Activated B cell treated with CpG ODN at 0.5 μM for 24 hours (primary cell): ENCODE measurements at regions of chr2 and their contacts with region 1.

Region 1: GRCh38 chr2:142914507-142915313 is 37.2 kb downstream of the KYNU start:
- DNase-seq: no peak
- ATAC-seq: peak; percentile 93
- H3K4me3 Mint-ChIP-seq: peak overlapping the region; percentile 69
- H3K27ac Mint-ChIP-seq: peak overlapping the region; percentile 86
- H3K4me1 Mint-ChIP-seq: peaks cover 51% of the 10 kb centered on the region
- H3K27me3 Mint-ChIP-seq: no peaks in the 10 kb centered on the region
- CTCF ChIP-seq: no peak

Region 2: DNA sequence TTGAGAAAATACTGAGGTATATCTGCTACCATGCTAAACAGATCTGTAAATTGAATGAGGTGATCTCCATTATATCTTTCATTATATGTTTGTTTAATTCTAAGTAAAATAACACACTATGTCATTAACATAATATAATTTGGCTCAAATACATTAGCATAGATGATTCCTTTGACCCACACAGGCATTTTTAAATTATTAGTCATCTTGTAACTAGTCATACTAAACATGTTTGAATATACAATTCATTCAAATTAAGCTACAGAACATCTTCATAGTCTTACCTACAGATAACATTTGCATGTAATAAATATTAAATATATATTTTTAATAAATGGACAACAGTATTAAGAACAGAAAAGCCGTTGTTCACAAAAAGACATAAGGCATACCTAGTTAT is 90.0 kb before region 1 on chr2:
- CTCF ChIA-PET with region 1: no interaction called
- POLR2A ChIA-PET with region 1: no interaction called
- intact Hi-C with region 1: no loop called
- DNase-seq: no peak
- ATAC-seq: no peak
- H3K4me3 Mint-ChIP-seq: no peak overlapping the region
- H3K27ac Mint-ChIP-seq: no peak overlapping the region
- H3K4me1 Mint-ChIP-seq: no peaks in the 10 kb centered on the region
- H3K27me3 Mint-ChIP-seq: no peaks in the 10 kb centered on the region
- CTCF ChIP-seq: no peak

Region 3: GRCh38 chr2:142930835-142931398 is 16.2 kb after region 1 on chr2:
- CTCF ChIA-PET with region 1: no interaction called
- POLR2A ChIA-PET with region 1: no interaction called
- intact Hi-C with region 1: loop called (anchors 2 kb)
- DNase-seq: no peak
- ATAC-seq: no peak
- H3K4me3 Mint-ChIP-seq: no peak overlapping the region
- H3K27ac Mint-ChIP-seq: no peak overlapping the region
- H3K4me1 Mint-ChIP-seq: no peaks in the 10 kb centered on the region
- H3K27me3 Mint-ChIP-seq: no peaks in the 10 kb centered on the region
- CTCF ChIP-seq: no peak

Region 4: GRCh38 chr2:142944276-142944675 is 29.6 kb after region 1 on chr2:
- CTCF ChIA-PET with region 1: no interaction called
- POLR2A ChIA-PET with region 1: no interaction called
- intact Hi-C with region 1: no loop called
- DNase-seq: no peak
- ATAC-seq: no peak
- H3K4me3 Mint-ChIP-seq: no peak overlapping the region
- H3K27ac Mint-ChIP-seq: no peak overlapping the region
- H3K4me1 Mint-ChIP-seq: peaks cover 12% of the 10 kb centered on the region
- H3K27me3 Mint-ChIP-seq: no peaks in the 10 kb centered on the region
- CTCF ChIP-seq: no peak